CD4-positive, alpha-beta memory T cell (primary cell): ENCODE measurements at regions of chrX and their contacts with region 1.

Region 1: DNA sequence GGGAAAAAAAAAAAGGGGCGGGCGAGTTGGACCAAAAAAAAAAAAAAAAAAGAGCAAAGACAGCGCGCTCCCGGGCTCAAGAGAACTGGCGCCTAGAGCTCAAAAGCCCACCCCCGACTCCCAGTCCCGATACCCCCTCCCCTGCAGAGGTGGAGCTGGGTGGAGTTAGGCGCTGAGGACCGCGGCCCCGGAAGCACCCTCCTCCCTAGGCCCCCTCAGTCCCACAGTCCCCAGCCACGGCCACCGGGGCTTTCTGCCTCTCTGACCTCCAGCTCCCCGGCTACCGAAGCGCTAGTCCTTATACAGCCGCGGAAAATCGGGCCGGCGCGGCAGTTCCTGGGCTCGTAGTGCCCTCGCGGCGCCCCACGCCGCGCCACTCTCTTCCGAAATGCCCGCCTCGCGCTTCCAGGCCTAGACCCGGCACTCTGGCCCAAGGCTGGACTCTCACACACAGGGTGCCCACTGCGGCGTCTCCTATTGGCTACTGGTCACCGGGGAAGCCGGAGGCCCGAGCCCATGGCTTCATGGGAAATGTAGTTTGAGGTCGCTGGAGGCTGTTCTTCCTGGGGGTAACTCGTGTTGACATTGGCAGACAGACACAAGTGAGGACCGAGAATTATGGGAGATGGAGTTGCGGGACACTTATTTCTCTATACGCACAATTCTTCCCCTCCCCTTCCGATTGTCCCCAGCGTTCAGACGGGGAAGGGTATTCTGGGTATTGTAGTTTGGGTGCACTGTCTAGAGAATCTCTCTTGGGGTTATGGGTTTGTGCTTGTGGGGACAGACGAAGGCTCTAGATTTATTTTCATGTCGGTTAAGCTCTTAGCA is at the start of gene ENOX2:
- DNase-seq: peak; percentile 83 to 92 (median 86)
- H3K4me3 ChIP-seq: peak within 1 kb of the TSS; percentile 47 to 80
- H3K4me3 Mint-ChIP-seq: no peak within 1 kb of the TSS
- H3K27ac ChIP-seq: peak within 1 kb of the TSS; percentile 85
- H3K27ac Mint-ChIP-seq: peak within 1 kb of the TSS in 5 of 7 donors; percentile 72 to 90 (median 75)
- H3K4me1 ChIP-seq: peaks cover 3% of the 10 kb centered on the region
- H3K4me1 Mint-ChIP-seq: peaks cover 0 to 9% (median 7%) of the 10 kb centered on the region in 4 donors
- H3K27me3 ChIP-seq: no peaks in the 10 kb centered on the region
- H3K27me3 Mint-ChIP-seq: no peaks in the 10 kb centered on the region
- total RNA-seq, gene ENOX2: 13.6 to 13.7 TPM

Region 2: GRCh38 chrX:129606918-129607317 is 1296.1 kb before region 1 on chrX:
- CTCF ChIA-PET with region 1: no interaction called
- POLR2A ChIA-PET with region 1: no interaction called
- intact Hi-C with region 1: loop called (anchors 5 kb)
- DNase-seq: peak; percentile 48 to 65 (median 58)
- H3K4me3 ChIP-seq: no peak overlapping the region
- H3K4me3 Mint-ChIP-seq: peak overlapping the region in 1 of 8 donors; percentile 39
- H3K27ac ChIP-seq: no peak overlapping the region
- H3K27ac Mint-ChIP-seq: peak overlapping the region in 1 of 7 donors; percentile 50
- H3K4me1 ChIP-seq: peaks cover 12% of the 10 kb centered on the region
- H3K4me1 Mint-ChIP-seq: peaks cover 2 to 25% (median 18%) of the 10 kb centered on the region in 4 donors
- H3K27me3 ChIP-seq: no peaks in the 10 kb centered on the region
- H3K27me3 Mint-ChIP-seq: no peaks in the 10 kb centered on the region

Region 3: GRCh38 chrX:130268500-130269170 is 634.4 kb before region 1 on chrX and contains the start of gene ZNF280C:
- CTCF ChIA-PET with region 1: no interaction called
- POLR2A ChIA-PET with region 1: no interaction called
- intact Hi-C with region 1: loop called (anchors 1 kb)
- DNase-seq: peak; percentile 85 to 93 (median 90)
- H3K4me3 ChIP-seq: peak within 1 kb of the TSS; percentile 57 to 76
- H3K4me3 Mint-ChIP-seq: peak within 1 kb of the TSS; percentile 87 to 92 (median 89)
- H3K27ac ChIP-seq: peak within 1 kb of the TSS; percentile 67
- H3K27ac Mint-ChIP-seq: peak within 1 kb of the TSS; percentile 82 to 94 (median 88)
- H3K4me1 ChIP-seq: peaks cover 24% of the 10 kb centered on the region
- H3K4me1 Mint-ChIP-seq: peaks cover 5 to 20% (median 7%) of the 10 kb centered on the region in 4 donors
- H3K27me3 ChIP-seq: no peaks in the 10 kb centered on the region
- H3K27me3 Mint-ChIP-seq: no peaks in the 10 kb centered on the region
- total RNA-seq, gene ZNF280C: 4.0 to 4.9 TPM

Region 4: DNA sequence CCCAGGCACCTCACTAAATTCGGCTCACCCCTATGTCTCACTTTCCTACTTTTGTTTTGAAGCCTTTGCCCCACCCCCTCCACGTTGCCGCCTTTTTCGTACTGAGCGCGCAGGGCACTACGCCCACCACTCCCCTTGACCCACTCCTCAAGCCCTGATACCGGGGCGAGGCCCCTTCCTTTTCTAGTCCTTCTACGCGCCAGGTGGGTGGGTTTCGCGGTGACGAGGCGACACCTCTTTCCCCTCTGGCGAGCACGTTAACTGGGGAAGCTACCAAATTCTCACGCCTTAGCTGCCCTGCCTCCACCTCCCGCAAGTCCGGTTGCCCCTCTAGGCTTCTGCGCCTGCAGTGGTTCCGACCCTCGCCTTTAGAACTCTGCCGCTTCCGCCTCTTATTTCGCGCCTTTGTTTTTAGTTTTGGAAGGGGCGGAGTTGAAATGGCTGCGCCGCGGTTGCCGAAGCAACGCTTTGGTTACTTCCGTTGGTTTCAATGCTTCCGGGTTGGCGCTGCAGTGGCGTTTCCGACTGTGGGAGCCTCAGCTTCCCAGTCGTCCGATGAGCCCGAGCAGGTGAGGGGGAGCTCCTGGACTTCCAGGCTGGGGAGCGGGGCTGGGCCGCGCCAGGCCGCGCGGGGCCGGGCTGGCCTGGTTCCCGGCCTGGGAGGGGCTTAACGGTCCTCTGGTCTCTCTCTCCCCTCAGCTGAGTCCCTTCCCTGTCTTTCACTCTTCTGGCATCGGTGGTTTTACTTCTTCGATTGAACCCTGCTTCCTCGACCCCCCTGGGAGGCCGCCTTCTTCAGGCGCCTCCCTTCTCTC is 563.4 kb before region 1 on chrX and contains the start of gene SLC25A14:
- CTCF ChIA-PET with region 1: no interaction called
- POLR2A ChIA-PET with region 1: no interaction called
- intact Hi-C with region 1: loop called (anchors 2 kb)
- DNase-seq: peak; percentile 72 to 77 (median 74)
- H3K4me3 ChIP-seq: peak within 1 kb of the TSS; percentile 65 to 77
- H3K4me3 Mint-ChIP-seq: peak within 1 kb of the TSS; percentile 92 to 98 (median 96)
- H3K27ac ChIP-seq: peak within 1 kb of the TSS; percentile 57
- H3K27ac Mint-ChIP-seq: peak within 1 kb of the TSS; percentile 82 to 96 (median 93)
- H3K4me1 ChIP-seq: peaks cover 6% of the 10 kb centered on the region
- H3K4me1 Mint-ChIP-seq: peaks cover 7 to 16% (median 12%) of the 10 kb centered on the region in 4 donors
- H3K27me3 ChIP-seq: no peaks in the 10 kb centered on the region
- H3K27me3 Mint-ChIP-seq: no peaks in the 10 kb centered on the region
- total RNA-seq, gene SLC25A14: 12.9 to 15.8 TPM

Region 5: DNA sequence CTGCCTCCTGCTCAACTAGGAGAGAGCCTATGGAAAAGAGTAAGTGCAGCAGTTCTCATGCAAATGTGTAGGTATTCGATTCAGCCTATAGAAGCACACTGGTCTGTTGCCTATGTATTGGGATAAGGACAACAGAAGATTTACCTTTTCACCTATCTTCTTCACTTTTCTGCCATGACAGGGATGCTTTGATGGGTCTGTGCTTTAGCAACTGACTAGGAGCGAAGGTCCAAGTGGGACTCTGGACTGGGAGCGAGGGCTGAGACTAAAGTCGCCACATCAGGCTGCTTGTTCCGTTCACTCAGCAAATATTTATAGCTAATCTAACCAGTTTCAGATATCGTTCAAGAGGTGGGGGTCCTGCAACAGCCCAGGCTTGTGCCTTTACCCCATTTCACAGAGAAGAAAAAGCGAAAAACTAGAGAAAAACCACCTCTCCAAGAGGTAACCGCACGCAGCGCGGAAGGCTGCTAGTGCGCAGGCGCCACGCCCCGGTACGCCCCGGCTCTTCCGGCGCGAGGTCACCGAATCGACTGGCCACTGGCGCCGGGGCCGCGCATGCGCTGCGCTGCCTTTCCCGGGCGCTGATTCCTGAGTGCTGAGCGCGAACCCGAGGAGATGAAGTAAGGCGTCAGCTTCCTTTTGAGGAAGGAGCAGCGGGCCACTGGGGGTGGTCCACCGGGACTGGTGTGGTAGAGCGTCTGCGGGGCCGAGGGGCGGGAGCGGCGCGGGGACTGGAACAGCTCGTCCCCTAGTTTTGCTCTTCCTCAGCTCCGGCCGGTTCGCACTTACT is 501.4 kb before region 1 on chrX and contains the start of gene RBMX2:
- CTCF ChIA-PET with region 1: no interaction called
- POLR2A ChIA-PET with region 1: interaction called, 3 read pairs
- intact Hi-C with region 1: loop called (anchors 5 kb)
- DNase-seq: peak; percentile 67 to 77 (median 74)
- H3K4me3 ChIP-seq: peak within 1 kb of the TSS; percentile 64 to 99
- H3K4me3 Mint-ChIP-seq: peak within 1 kb of the TSS; percentile 81 to 95 (median 86)
- H3K27ac ChIP-seq: peak within 1 kb of the TSS; percentile 71
- H3K27ac Mint-ChIP-seq: peak within 1 kb of the TSS; percentile 81 to 96 (median 94)
- H3K4me1 ChIP-seq: peaks cover 16% of the 10 kb centered on the region
- H3K4me1 Mint-ChIP-seq: peaks cover 7 to 33% (median 18%) of the 10 kb centered on the region in 4 donors
- H3K27me3 ChIP-seq: no peaks in the 10 kb centered on the region
- H3K27me3 Mint-ChIP-seq: peaks cover 7 to 10% of the 10 kb centered on the region in 2 donors
- total RNA-seq, gene RBMX2: 23.0 to 28.0 TPM

Region 6: DNA sequence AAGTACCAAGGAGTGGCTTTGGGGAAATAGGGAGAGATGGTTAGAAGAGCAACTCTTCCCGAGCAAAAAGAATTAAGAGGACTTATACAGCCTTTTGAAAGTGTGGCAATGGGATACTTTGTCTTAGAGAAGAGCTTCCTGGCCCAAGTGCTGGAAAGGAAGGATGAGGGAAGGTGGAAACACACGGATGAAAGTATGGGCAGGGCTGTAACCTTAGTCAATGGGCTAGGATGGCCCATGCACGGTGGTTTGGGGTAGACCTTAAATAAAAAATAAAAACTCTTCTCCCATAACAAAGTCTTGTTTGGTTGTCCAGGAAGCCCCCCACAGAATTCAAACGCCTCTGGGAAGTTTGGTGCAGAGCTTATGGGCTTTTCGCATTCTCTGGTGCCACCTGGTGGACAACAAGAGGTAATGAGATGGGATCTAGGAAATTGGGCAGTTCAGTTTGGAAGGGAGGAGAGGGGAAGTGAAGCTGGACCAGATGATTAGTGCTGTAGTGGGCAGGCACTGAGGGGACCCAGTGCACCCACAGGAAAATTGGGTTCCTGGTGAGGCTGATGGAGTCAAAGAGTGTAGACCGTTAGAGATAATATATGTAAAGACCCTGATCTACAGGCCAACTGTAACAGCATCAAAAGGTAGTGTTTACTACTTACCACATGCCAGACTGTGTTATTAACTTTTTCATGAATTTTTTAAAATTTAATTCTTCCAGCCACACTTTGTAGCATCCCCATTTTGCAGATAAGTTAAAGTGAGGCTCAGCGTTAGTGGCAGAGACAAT is 13.8 kb after region 1 on chrX:
- CTCF ChIA-PET with region 1: interaction called, 16 read pairs
- POLR2A ChIA-PET with region 1: no interaction called
- intact Hi-C with region 1: no loop called
- DNase-seq: peak; percentile 33 to 41 (median 38)
- H3K4me3 ChIP-seq: no peak overlapping the region
- H3K4me3 Mint-ChIP-seq: no peak overlapping the region
- H3K27ac ChIP-seq: no peak overlapping the region
- H3K27ac Mint-ChIP-seq: no peak overlapping the region
- H3K4me1 ChIP-seq: no peaks in the 10 kb centered on the region
- H3K4me1 Mint-ChIP-seq: no peaks in the 10 kb centered on the region
- H3K27me3 ChIP-seq: no peaks in the 10 kb centered on the region
- H3K27me3 Mint-ChIP-seq: peaks cover 2% of the 10 kb centered on the region in 2 donors

Region 7: GRCh38 chrX:131025336-131025735 is 122.3 kb after region 1 on chrX:
- CTCF ChIA-PET with region 1: no interaction called
- POLR2A ChIA-PET with region 1: no interaction called
- intact Hi-C with region 1: no loop called
- DNase-seq: no peak
- H3K4me3 ChIP-seq: no peak overlapping the region
- H3K4me3 Mint-ChIP-seq: no peak overlapping the region
- H3K27ac ChIP-seq: no peak overlapping the region
- H3K27ac Mint-ChIP-seq: no peak overlapping the region
- H3K4me1 ChIP-seq: no peaks in the 10 kb centered on the region
- H3K4me1 Mint-ChIP-seq: no peaks in the 10 kb centered on the region
- H3K27me3 ChIP-seq: no peaks in the 10 kb centered on the region
- H3K27me3 Mint-ChIP-seq: peaks cover 4 to 7% of the 10 kb centered on the region in 2 donors

Region 8: DNA sequence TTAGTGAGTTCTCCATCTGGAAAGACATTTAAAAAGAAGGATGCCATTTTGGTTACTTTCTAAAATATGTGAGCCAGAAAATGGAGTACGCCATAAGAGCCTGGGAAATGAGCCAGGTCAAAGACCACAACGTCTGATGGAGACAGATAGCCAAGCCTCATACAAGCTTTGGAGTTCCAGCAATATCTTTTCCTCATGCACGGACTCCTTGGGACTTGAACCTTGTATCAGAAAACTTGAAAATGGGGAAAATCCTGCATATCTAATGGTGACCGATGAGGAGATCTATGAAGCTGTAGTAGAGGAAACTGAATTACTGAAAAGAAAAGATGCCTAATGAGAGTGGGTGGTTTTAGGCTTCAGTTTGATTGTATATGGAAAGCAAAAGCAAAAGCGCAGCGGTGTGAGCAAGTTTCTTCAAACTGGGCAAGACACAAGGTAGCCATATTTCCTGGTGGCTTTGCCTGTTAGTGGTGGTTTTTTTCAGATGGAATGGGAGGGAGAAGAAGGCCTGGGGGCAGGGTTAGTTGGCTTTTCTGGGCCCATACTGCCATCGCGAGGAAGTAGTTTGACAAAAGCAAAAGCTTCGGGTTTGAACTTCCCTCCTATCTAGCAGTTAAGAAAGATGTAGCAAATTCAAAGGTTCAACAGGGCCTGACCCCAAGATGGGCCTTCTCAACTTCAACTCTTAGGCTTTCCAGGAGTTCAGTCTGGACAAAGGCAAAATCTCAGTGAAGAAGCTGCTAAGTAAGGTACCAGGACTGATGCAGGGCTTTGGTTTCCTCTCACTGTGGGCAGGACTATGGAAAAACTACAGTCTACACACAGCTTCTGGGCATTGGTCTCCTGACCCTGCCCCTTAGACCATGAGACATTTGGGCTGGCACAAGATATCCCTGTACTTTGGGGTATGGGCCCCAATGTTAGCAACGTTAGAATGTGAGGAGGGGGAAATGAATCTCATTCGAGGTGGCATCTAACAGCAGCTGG is 910.1 kb after region 1 on chrX:
- CTCF ChIA-PET with region 1: no interaction called
- POLR2A ChIA-PET with region 1: no interaction called
- intact Hi-C with region 1: loop called (anchors 10 kb)
- DNase-seq: peak; percentile 85 to 96 (median 93)
- H3K4me3 ChIP-seq: peak overlapping the region in 1 of 2 donors; percentile 49
- H3K4me3 Mint-ChIP-seq: peak overlapping the region; percentile 88 to 97 (median 92)
- H3K27ac ChIP-seq: peak overlapping the region; percentile 63
- H3K27ac Mint-ChIP-seq: peak overlapping the region; percentile 77 to 98 (median 94)
- H3K4me1 ChIP-seq: peaks cover 20% of the 10 kb centered on the region
- H3K4me1 Mint-ChIP-seq: peaks cover 5 to 32% (median 17%) of the 10 kb centered on the region in 4 donors
- H3K27me3 ChIP-seq: no peaks in the 10 kb centered on the region
- H3K27me3 Mint-ChIP-seq: no peaks in the 10 kb centered on the region